Left cardiac atrium (tissue), 4 donors: ENCODE measurements at regions of chr1 and their contacts with region 1.

Region 1: DNA sequence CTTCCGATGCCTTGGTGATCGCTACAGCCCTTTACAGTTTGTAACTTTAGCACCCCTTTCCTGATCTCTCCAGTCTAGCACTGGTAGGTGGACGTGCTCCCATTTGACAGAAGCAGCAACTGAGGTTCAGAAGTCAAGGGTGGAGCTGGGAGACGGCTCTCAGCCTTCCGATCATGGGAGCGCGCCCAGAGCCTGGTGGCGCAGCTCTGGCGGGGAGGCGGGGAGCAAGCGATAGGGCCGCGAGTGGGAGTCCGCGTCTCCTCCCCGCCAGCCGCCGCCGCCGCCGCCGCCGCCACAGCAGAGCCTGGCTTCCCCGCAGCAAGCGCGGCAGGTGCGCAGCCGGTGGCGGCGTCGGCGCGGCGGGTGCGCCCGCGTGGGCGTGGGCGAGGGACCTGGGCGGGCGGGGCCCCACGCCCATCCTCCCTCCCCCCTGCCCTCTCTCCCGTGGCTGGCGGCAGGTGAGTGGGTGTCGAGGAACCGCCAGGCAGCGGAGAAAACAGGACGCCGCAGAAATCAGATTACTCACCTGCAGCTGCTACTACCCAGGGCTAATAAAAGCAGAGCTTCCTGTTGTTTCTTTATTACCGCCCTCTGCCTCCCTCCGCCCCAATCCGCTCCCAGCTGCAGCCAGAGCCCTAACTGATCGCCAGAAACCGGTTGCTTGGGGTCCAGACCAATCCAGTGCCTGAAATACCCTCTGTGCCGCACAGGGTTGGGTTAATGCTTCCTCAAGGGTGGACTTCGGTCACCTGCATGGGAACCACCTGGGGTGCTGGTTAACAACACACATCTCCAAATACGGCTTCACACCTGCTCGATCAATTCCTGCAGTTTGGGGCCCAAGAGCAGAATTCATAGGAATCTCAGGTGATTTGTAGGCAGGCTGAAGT is 60.2 kb upstream of the ID3 start:
- DNase-seq: peak; percentile 40
- ATAC-seq: peak; percentile 70 to 73

Region 2: DNA sequence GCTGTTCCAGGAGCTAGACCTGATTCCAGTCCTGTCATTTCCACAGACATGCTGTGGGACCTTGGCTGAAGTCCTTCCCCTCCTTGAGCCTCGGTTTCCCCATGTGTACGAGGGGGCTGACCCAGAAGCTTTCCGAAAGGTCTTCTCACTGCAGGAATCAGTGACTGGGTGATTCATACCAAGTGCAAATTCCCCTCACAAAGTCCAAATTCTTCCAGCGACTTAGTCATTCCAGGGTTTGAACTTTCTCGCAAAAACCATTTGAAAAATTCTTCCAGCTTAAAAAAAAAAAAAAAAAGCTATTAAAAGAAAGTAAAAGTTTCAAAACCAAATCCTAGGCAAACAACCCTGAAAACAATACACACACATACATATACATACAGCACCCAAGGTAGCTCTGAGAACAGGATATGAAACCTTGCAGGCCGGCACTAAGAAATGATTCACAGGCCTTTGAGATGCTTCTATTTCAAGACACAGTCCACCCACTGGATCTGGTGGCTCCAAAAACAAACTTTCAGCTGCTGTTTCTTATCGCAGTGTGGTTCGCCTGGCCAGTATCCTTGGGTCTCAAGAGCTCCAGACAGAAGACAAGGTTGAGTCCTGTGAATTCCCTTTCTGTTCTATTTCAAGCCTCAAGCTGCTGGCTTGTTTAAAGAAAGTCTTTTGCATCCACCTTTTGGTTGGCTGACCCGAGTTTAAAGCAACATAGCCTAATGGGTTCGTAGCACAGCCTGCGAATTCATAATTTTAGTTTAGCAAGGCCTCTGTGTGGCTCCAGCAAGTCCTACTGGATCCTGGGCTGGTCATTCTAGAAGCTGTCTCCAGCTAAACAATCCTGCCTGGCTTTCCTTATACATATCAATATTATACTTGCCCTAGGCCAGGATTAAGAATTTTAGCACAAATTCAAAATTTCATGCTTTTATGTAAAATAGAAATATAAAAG is 42.2 kb before region 1 on chr1:
- intact Hi-C with region 1: loop called in 1 of 2 experiments (anchors 5 kb)
- DNase-seq: no peak
- ATAC-seq: peak; percentile 58 to 88